ENCODE measurements at regions of chr12 and their contacts with region 1.

Region 1: GRCh38 chr12:48957141-48958048 is at the start of gene ARF3:
- DNase-seq: peak; percentile 94
- H3K4me3 Mint-ChIP-seq: peak within 1 kb of the TSS; percentile 95
- H3K27ac Mint-ChIP-seq: peak within 1 kb of the TSS; percentile 64
- H3K4me1 Mint-ChIP-seq: peaks cover 36% of the 10 kb centered on the region
- H3K27me3 Mint-ChIP-seq: peaks cover 12% of the 10 kb centered on the region
- total RNA-seq, gene ARF3: 114 to 122 TPM

Region 2: GRCh38 chr12:48795480-48796455 is 161.6 kb before region 1 on chr12:
- CTCF ChIA-PET with region 1: no interaction called
- POLR2A ChIA-PET with region 1: no interaction called
- DNase-seq: peak; percentile 65
- H3K4me3 Mint-ChIP-seq: no peak overlapping the region
- H3K27ac Mint-ChIP-seq: no peak overlapping the region
- H3K4me1 Mint-ChIP-seq: peaks cover 9% of the 10 kb centered on the region
- H3K27me3 Mint-ChIP-seq: peaks cover 9% of the 10 kb centered on the region

Region 3: DNA sequence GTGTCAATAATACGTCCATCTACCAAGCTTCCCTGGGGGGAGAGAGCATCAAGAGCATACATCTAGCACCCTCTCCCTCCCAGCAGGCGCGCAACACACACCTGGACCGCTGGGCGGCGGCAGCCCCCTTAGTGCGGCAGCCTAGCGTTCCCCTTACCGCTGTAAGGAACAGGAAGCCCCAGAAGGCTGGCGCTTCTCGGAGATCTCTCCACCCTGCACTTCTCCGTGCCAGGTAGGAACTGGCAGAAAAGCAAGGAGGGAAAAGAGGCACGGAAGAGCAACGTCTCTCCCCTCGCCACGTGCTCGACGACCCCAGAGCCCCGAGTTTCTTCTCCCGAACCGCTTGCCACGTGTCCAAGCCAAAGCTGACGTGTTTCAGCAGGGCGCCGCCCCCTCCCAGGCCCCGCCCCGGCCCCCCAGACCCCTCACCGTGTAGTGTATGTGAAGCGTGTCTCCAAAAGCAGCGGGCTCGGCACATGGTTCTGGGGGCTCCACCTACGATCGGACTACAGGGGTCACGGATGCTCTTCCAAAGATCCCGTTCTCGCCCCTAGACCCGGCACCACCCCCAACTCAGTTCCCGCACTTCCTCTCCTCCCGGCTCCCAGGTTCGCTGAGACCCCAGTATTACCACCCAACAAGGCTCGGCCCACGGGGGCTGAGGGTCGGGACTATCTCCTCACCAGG is 32.6 kb before region 1 on chr12:
- CTCF ChIA-PET with region 1: no interaction called
- POLR2A ChIA-PET with region 1: interaction called, 14 read pairs
- DNase-seq: peak; percentile 71
- H3K4me3 Mint-ChIP-seq: peak overlapping the region; percentile 94
- H3K27ac Mint-ChIP-seq: peak overlapping the region; percentile 89
- H3K4me1 Mint-ChIP-seq: peaks cover 43% of the 10 kb centered on the region
- H3K27me3 Mint-ChIP-seq: no peaks in the 10 kb centered on the region

Region 4: DNA sequence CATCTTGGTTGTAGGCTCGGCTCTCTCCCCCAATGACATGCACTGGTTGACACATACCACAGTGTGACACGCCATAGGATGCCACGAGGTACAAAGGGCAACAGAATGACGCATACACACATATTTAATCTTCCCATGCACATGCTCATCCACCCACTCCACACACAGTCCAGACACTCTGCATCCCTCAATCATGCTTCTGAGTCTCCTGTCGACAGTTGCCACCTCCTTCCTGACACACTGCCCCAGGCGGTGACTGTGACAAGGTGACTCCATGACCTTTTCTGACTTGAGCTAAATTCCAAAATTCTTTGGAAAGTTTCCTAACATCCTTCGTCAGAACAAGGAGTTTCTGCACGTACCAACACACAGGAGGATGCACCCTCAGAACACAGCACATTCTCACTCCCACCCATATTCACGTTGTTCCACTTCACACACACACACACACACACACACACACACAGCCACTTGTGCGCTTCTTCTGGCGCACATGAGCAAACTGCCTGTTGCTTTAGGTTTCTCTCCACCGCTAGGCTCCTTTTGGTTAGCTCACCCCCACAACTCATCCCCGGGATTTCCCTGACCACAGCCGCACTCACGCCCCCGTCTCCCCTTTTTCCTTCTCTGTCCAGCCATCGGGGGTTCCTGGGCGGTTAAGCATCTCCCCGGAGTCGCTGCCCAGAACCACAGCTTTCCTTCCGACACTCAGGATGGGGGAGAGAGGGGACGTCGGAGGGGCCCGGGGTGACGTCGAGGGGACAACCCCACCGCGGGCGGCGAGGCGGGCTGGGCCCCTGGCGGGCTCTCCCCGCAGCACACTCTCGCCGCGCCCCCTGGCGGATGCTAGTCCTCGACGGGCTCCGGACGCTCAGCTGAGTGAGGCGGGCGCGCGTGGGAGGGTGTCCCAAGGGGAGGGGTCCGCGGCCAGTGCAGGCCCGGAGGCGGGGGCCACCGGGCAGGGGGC is 20.2 kb after region 1 on chr12:
- CTCF ChIA-PET with region 1: interaction called, 55 read pairs
- POLR2A ChIA-PET with region 1: interaction called, 6 read pairs
- DNase-seq: peak; percentile 79
- H3K4me3 Mint-ChIP-seq: peak overlapping the region; percentile 45
- H3K27ac Mint-ChIP-seq: no peak overlapping the region
- H3K4me1 Mint-ChIP-seq: peaks cover 59% of the 10 kb centered on the region
- H3K27me3 Mint-ChIP-seq: peaks cover 91% of the 10 kb centered on the region

Measured in activated CD4-positive, alpha-beta memory T cell treated with anti-CD3 and anti-CD28 coated beads, Interleukin-2, amount 10 ng/mL, durations not matched to agents 7 days and 5 days (primary cell).